ENCODE measurements at regions of chr2 and their contacts with region 1.

Region 1: DNA sequence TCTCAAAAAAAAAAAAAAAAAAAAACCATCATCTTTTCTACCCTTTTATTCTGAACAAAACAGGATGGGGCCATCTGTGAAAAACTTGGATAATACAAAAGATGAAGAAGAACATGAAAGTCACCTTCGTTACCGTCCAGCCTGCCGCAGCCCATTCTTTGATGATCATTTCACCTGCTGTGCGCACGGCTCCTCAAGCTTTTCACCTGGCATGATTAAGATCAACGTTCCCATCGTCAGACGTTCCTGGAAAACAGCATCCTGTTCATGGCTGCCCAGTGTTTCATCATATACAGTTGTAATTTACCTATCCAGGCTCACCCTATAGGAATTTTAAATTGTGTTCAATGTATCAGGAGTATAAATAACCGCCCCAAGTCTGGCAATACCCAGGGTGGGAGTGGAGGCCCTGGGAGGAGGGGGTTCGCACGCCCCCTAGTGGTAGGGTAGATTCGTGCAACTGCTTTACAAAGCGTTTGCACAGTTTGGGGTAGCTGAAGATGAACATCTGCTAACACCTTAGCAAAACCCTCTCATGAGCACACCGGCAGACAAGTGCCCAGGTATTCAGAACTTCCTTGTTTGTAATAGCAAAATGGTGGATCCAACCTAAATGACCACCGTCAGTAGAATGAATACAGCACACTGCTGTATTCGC is 49.0 kb upstream of the GLI2 start:
- DNase-seq: no peak
- H3K4me3 ChIP-seq: no peak overlapping the region
- H3K27ac ChIP-seq: no peak overlapping the region
- H3K27me3 ChIP-seq: peaks cover 15% of the 10 kb centered on the region
- CTCF ChIP-seq: peak; percentile 38

Region 2: GRCh38 chr2:120305296-120305695 is 381.3 kb before region 1 on chr2:
- CTCF ChIA-PET with region 1: interaction called, 10 read pairs
- POLR2A ChIA-PET with region 1: no interaction called
- DNase-seq: no peak
- H3K4me3 ChIP-seq: no peak overlapping the region
- H3K27ac ChIP-seq: no peak overlapping the region
- H3K27me3 ChIP-seq: no peaks in the 10 kb centered on the region
- CTCF ChIP-seq: peak; percentile 52

Region 3: GRCh38 chr2:121242175-121242875 is 555.7 kb after region 1 on chr2:
- CTCF ChIA-PET with region 1: no interaction called
- POLR2A ChIA-PET with region 1: no interaction called
- DNase-seq: no peak
- H3K4me3 ChIP-seq: no peak overlapping the region
- H3K27ac ChIP-seq: no peak overlapping the region
- H3K27me3 ChIP-seq: peaks cover 21% of the 10 kb centered on the region
- CTCF ChIP-seq: no peak